Activated T-helper 2 cell treated with anti-CD3 and anti-CD28 coated beads, Interferon-gamma antibody, Interleukin-2, Interleukin-4, amounts not matched to agents 10 μg/mL and 5 μg/mL and 100 μg/mL, durations not matched to agents 14 hours and 24 hours and 36 hours (primary cell): ENCODE measurements at regions of chr1 and their contacts with region 1.

Region 1: DNA sequence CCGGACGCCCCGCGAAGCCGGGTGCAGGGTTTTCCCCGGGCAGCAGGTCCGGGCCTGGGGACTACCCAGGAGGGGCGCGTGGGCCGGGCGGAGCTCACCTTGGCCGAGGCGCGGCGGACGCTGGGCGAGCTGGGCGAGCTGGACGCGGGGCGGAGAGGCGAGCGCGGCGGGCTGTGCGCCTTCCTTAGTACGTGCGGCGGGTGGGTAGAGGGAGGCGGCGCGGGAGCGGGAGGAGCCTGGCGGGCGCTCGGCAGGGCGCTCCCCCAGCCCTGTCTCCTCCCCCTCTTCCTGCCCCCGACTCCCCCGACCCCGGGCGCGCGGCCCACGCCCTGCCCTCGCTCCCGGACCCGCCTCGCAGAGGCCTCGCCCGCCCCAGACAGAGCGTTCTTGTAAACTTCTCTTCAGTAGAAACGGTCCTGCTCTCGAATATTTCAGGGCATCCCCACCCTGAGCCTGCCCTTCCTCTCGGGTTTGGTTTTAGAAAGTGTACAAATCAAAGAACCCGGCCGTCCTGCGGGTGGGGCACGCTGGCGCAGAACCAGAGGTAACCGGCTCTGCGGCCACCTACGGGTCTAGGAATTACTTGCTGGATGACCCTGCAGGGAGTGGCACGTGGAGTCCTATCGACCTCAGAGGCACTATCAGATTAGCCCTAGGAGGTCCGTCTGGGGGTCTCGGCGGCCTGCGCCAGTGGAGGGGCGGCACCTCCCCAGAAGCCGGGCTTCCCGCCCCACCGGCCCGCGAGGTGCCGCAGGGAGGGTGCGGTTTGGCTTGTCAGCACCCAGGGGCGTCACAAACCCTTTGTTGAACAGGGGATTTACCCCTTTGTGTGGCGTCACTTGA is at the start of gene S100A10:
- DNase-seq: peak; percentile 80
- H3K4me3 Mint-ChIP-seq: peak within 1 kb of the TSS; percentile 96
- H3K27ac Mint-ChIP-seq: peak within 1 kb of the TSS; percentile 96
- H3K4me1 Mint-ChIP-seq: peaks cover 48% of the 10 kb centered on the region
- H3K27me3 Mint-ChIP-seq: no peaks in the 10 kb centered on the region
- total RNA-seq, gene S100A10: 145 and 160 TPM in 2 replicates

Region 2: DNA sequence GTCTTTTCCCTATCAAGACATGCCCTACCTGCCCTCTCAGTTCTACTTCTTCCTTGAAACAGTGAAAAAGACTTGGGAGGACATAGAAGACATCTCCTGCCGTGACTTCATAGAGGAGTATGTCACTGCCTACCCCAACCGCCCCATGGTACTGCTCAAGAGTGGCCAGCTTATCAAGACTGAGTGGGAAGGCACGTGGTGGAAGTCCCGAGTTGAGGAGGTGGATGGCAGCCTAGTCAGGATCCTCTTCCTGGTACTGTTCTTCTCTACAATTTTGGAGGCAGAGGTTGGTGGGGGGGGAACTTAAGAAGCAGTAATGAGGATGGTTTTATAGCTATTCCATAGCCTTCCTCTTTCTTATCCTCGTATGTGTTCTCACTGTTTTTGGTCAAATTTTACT is 1049.0 kb before region 1 on chr1:
- intact Hi-C with region 1: no loop called
- DNase-seq: no peak
- H3K4me3 Mint-ChIP-seq: no peak overlapping the region
- H3K27ac Mint-ChIP-seq: no peak overlapping the region
- H3K4me1 Mint-ChIP-seq: peaks cover 3% of the 10 kb centered on the region
- H3K27me3 Mint-ChIP-seq: no peaks in the 10 kb centered on the region

Region 3: GRCh38 chr1:151867785-151868411 is 126.0 kb before region 1 on chr1:
- intact Hi-C with region 1: no loop called
- DNase-seq: no peak
- H3K4me3 Mint-ChIP-seq: no peak overlapping the region
- H3K27ac Mint-ChIP-seq: no peak overlapping the region
- H3K4me1 Mint-ChIP-seq: peaks cover 5% of the 10 kb centered on the region
- H3K27me3 Mint-ChIP-seq: no peaks in the 10 kb centered on the region

Region 4: DNA sequence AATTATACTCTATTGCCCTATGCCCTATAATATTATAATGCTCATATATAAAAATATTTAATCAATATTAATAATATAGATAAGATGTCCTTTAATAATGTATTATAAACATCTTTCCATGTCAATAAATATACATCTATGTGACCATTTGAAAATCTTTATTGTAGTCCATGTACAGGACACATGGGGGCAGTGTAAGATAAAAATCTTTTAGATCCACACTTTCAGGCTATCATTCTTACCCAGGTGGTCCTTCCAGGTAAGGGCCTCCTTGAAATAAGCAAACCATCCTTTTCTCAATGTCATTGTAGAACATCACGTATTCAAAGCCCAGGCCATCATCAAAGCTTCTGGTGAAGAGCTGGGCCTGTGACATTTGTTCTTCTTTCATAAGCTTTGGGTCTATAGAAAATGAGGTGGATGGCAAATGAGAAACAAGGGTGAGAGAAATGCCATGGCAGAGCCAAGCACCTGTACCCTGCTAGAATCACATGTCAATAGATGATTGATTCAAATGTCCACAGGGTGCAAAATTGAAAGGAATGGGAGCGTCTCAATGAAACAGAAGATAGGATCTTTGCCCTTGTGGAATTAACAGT is 104.8 kb before region 1 on chr1:
- intact Hi-C with region 1: loop called (anchors 2 kb)
- DNase-seq: no peak
- H3K4me3 Mint-ChIP-seq: no peak overlapping the region
- H3K27ac Mint-ChIP-seq: no peak overlapping the region
- H3K4me1 Mint-ChIP-seq: peaks cover 26% of the 10 kb centered on the region
- H3K27me3 Mint-ChIP-seq: no peaks in the 10 kb centered on the region

Region 5: DNA sequence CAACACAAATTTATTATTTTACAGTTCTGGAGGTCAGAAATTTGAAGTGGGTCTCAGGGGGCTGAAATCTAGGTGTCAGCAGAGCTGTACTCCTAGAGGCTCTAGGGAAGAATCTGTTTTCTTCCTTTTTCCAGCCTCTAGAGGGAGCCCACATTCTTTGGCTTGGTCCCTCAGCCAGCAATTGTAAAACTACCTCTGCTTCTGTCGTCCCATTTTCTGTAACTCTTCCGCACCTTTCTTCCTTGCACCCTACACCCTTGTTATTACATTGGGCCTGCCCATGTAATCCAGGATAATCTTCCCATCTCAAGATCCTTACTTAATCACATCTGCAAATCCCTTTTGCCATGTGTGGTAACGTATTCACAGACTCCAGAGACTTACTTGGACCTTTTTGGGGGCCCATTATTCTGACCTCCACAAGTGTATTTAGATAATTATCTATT is 59.8 kb before region 1 on chr1:
- intact Hi-C with region 1: loop called (anchors 2 kb)
- DNase-seq: no peak
- H3K4me3 Mint-ChIP-seq: no peak overlapping the region
- H3K27ac Mint-ChIP-seq: no peak overlapping the region
- H3K4me1 Mint-ChIP-seq: peaks cover 3% of the 10 kb centered on the region
- H3K27me3 Mint-ChIP-seq: peaks cover 14% of the 10 kb centered on the region

Region 6: DNA sequence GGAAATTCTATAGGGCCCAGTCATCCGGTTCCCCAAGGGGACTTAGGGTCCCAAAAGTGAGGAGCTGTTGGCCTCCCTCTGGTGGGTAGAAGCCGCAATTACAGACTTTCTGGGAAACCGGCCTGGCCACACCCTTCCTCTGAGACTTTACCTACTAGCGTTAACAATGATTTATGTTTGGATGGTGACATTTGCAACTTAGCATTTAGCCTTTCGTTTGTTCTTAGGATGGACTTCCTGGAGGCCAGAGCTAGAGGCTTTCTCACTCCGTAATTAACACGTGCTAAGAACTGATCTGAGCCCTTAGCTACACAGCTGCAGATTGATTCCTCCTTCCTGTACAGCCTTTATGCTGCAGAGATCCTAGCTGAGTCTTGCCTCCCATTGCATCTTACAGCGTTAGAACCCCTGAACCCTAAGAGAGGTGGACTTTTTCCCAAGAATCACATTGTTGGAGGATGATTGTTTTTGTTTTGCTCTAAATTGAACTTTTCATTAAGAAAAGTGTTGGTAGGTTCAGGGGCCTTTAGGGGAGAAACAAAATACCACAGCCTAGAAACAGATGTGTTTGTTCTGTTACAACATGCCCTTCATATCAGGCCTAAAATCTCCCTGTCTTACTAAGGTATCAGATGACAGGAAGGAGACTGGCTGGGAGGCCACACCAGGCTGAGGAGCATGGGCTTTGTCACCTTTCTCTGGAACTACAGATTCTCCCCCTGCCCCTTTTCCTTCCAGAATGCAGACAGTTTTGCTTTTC is 41.0 kb after region 1 on chr1:
- intact Hi-C with region 1: loop called (anchors 2 kb)
- DNase-seq: peak; percentile 66
- H3K4me3 Mint-ChIP-seq: peak overlapping the region; percentile 99
- H3K27ac Mint-ChIP-seq: peak overlapping the region; percentile 97
- H3K4me1 Mint-ChIP-seq: peaks cover 33% of the 10 kb centered on the region
- H3K27me3 Mint-ChIP-seq: no peaks in the 10 kb centered on the region